Dorsolateral prefrontal cortex (tissue), 120 donors: ENCODE measurements at regions of chr9 and their contacts with region 1.

Region 1: DNA sequence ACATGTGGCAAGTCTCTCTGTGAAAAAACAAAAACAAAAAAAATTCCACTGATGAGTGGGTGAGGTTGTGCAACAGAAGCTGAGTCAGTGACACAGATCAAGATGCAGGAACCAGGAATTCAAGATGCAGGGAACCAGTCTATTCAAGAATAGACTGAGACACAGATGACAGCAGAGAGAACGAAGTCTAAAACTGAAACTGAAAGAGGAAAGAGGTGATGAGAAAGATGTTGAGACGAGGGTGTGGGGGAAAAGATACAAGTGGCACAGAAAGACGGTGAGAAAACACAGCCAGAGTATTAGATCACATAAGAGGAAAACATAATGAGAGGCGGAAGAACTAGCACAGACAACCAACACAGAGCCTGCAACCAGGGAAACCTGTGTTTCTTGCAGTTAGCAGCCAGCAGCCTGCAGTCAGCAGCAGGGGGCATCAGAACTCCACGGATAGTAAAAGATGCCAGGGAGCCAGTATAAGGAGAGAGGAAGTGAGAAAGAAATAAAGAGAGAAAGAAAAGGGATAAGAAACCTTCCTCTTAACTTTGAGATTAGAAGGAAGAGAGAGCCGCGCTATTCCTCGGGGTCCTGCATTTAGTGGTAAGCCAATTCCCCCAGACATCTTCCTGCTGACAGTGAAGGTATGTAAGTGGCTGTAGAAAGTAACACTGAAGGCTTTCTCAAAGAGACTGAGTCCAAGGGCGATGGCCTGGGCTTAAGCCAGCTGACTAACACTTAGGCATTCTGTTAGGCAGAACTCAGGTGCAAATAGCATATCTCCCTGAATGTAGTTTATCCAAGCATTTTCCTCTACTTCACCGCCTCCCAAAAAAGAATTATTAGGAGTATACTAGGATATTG is 79.0 kb downstream of the TLR4 start:
- DNase-seq: peak; percentile 66 to 91 (median 85)
- H3K4me3 ChIP-seq: peak overlapping the region; percentile 11 to 70 (median 52)
- H3K27ac ChIP-seq: peak overlapping the region in 54 of 59 donors; percentile 26 to 89 (median 69)
- H3K27me3 ChIP-seq: no peaks in the 10 kb centered on the region
- CTCF ChIP-seq: peak; percentile 64 to 97 (median 90)

Region 2: DNA sequence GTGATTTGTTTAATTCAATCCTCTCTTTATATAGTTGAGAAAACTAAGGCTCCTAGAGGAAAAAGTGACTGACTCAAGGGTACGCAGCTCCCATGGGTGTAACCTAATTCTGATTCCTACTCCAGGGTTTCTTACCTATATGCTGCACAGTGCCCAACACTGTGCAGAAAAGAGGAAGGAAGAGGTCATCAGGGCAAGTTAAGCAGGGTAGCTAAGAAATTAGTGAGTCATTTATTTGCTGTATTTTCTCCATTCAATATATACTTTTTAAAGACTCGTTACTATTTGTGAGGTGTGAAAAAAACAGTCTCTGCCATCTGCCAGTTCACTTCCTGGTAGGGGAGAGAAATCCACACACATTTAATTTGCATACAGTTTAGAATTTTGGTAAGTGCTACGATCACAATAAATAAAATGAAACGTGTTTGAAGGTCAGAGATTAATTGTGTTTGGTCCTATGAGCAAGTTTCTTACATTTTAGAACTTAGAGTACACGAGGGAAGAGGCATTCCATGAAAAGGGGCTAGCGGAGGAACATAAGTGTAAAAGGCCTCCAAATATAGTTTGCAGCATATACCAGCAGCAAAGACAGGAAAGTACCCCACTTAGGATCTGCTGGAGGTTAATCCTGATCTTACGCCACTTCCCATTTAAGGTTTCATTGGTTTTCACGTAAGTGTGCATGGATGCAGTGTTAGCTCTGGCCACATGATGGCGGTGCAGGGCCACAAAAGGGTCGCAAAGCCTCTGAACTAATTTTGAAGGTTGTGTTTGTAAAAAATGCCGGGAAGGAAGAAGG is 138.8 kb before region 1 on chr9:
- intact Hi-C with region 1: loop called (anchors 5 kb)
- DNase-seq: peak; percentile 69 to 86 (median 80)
- H3K4me3 ChIP-seq: peak overlapping the region in 57 of 59 donors; percentile 1 to 66 (median 43)
- H3K27ac ChIP-seq: peak overlapping the region in 49 of 59 donors; percentile 14 to 85 (median 65)
- H3K27me3 ChIP-seq: peaks cover 0 to 5% (median 0%) of the 10 kb centered on the region in 45 donors
- CTCF ChIP-seq: peak; percentile 84 to 99 (median 97)

Region 3: DNA sequence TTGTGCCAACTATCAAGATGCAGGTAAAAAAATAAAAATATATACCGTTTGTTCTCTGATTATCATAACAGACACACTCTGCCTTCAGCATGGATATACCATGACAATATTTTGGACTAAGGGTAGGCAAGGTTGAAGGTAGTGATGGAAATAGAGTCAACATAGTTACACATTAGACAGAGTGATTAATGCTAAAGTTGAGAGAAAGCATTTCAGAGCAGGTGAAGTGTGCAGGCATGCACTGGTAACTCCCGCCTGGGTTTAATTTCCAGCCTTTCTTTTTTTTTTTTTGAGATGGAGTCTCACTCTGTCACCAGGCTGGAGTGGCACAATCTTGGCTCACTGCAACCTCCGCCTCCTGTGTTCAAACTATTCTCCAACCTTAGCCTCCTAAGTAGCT is 379.6 kb after region 1 on chr9:
- intact Hi-C with region 1: loop called in 1 of 2 experiments (anchors 10 kb)
- DNase-seq: no peak
- H3K4me3 ChIP-seq: no peak overlapping the region
- H3K27ac ChIP-seq: no peak overlapping the region
- H3K27me3 ChIP-seq: no peaks in the 10 kb centered on the region
- CTCF ChIP-seq: no peak

Region 4: GRCh38 chr9:119289740-119290433 is 1506.7 kb after region 1 on chr9:
- intact Hi-C with region 1: loop called in 1 of 2 experiments (anchors 10 kb)
- DNase-seq: peak in 1 of 10 donors; percentile 56
- H3K4me3 ChIP-seq: no peak overlapping the region
- H3K27ac ChIP-seq: peak overlapping the region in 6 of 59 donors; percentile 6 to 44 (median 12)
- H3K27me3 ChIP-seq: no peaks in the 10 kb centered on the region
- CTCF ChIP-seq: peak in 55 of 56 donors; percentile 48 to 75 (median 65)

Region 5: GRCh38 chr9:119365291-119366027 is 1582.3 kb after region 1 on chr9:
- intact Hi-C with region 1: loop called (anchors 1 to 10 kb)
- DNase-seq: peak in 8 of 10 donors; percentile 54 to 81 (median 63)
- H3K4me3 ChIP-seq: peak overlapping the region in 51 of 59 donors; percentile 1 to 89 (median 40)
- H3K27ac ChIP-seq: peak overlapping the region in 33 of 59 donors; percentile 1 to 83 (median 45)
- H3K27me3 ChIP-seq: peaks cover 0 to 29% (median 8%) of the 10 kb centered on the region in 45 donors
- CTCF ChIP-seq: peak; percentile 34 to 82 (median 70)